GM23248 (cell line): ENCODE measurements at regions of chr3 and their contacts with region 1.

Region 1: GRCh38 chr3:36540888-36541518 is 160.7 kb downstream of the STAC start:
- DNase-seq: peak; percentile 76
- H3K4me3 ChIP-seq: no peak overlapping the region
- H3K27ac ChIP-seq: no peak overlapping the region
- H3K4me1 ChIP-seq: peaks cover 22% of the 10 kb centered on the region
- H3K27me3 ChIP-seq: no peaks in the 10 kb centered on the region

Region 2: DNA sequence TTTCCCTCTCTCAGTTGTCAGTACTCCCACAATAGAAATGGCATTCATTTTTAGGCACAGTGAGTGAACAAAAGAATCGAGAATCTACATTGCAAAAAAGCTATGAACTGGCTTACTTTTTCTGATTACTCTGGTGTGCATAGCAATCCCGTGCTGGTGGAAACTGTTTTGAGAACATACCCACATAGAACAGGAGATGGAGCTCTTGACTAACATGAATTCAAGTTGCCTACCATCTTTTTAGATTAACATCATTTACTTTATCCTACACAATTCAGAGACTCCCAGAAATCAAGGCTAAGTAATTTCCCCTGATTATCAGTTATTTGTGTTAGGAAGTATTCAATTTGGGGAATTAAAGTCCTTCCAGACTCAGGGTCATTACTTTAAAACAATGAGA is 575.1 kb before region 1 on chr3:
- in situ Hi-C with region 1: loop called (anchors 25 kb)
- DNase-seq: peak; percentile 71
- H3K4me3 ChIP-seq: no peak overlapping the region
- H3K27ac ChIP-seq: no peak overlapping the region
- H3K4me1 ChIP-seq: no peaks in the 10 kb centered on the region
- H3K27me3 ChIP-seq: no peaks in the 10 kb centered on the region

Region 3: DNA sequence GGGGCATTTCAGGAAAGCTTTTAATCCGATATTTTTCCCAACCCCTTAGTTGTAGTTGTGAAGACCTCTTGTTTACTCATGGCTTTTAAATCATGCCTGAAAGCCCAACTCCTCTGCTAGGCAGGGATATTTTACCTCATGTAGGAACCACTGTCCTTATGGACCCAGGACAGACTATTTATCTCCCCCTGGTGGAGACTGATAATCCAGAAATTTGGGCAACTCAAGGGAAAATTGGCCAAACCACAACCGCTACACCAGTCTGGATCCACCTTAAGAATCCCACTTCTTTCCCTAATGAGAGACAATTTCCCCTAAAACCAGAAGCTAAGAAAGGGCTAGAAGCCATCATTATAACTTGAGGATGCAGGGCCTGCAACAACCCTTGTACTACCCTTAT is 408.8 kb before region 1 on chr3:
- in situ Hi-C with region 1: loop called (anchors 25 kb)
- DNase-seq: peak; percentile 5
- H3K4me3 ChIP-seq: no peak overlapping the region
- H3K27ac ChIP-seq: no peak overlapping the region
- H3K4me1 ChIP-seq: no peaks in the 10 kb centered on the region
- H3K27me3 ChIP-seq: no peaks in the 10 kb centered on the region

Region 4: DNA sequence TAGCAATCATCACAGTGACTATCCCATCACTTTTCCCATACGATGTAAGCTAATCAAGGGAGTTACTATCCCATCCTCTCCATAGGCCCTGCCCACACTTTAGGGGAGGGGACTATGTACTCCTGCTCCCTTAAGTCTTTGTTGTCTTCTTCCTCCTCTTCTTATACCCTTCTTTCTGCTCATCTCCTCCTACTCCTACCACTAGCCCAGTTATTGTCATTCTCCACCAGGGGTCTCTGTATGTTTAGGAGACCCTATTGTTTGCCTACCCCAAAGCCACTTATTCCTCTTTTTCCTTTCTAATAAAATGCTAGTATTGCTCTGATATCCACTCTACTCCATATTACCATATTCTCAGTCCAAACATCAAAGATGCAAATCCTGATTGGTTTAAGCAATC is 132.9 kb before region 1 on chr3:
- in situ Hi-C with region 1: no loop called
- DNase-seq: no peak
- H3K4me3 ChIP-seq: no peak overlapping the region
- H3K27ac ChIP-seq: no peak overlapping the region
- H3K4me1 ChIP-seq: peaks cover 8% of the 10 kb centered on the region
- H3K27me3 ChIP-seq: no peaks in the 10 kb centered on the region

Region 5: GRCh38 chr3:36786921-36787890 is 246.2 kb after region 1 on chr3:
- in situ Hi-C with region 1: no loop called
- DNase-seq: no peak
- H3K4me3 ChIP-seq: no peak overlapping the region
- H3K27ac ChIP-seq: no peak overlapping the region
- H3K4me1 ChIP-seq: peaks cover 12% of the 10 kb centered on the region; the same call in 1 of the 2 replicates
- H3K27me3 ChIP-seq: 0 out of 2 replicates have a peak, but pooled peaks cover 8% of the 10 kb centered on the region